ENCODE measurements at regions of chr12 and their contacts with region 1.

Region 1: DNA sequence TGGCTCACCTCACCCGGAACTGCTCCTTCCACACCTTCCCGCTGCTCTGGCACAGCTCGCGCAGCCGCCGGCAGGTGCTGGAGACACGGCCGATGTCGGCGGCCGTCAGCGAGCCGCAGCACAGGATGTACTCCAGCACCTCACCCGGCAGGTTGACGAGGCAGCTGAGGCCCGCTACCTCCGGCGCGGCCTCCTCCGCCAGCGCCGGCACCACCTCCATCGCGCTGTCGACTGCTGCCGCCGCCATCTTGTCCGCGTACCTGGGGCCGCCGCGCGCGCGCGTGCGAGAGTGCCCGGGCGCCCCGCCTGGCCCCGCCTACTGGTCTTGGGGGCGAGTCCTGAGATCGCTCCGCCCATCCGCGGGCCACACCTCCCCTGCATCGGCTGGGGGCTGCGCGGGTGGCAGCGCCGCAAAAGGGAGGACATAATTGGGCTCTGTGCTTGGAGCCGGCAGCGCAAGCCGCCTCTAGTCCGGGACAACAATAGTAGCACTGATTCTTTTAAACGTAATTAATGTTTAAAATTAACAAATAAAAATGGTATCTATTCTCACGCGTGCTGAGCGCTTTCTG is at the start of gene FBXO21:
- DNase-seq: peak; percentile 87 to 95
- H3K4me3 ChIP-seq: peak within 1 kb of the TSS; percentile 100
- H3K4me3 Mint-ChIP-seq: peak within 1 kb of the TSS; percentile 89
- H3K27ac Mint-ChIP-seq: peak within 1 kb of the TSS; percentile 45
- H3K4me1 ChIP-seq: peaks cover 6% of the 10 kb centered on the region; the same call in 1 of the 2 replicates
- H3K4me1 Mint-ChIP-seq: peaks cover 12% of the 10 kb centered on the region
- H3K27me3 ChIP-seq: no peaks in the 10 kb centered on the region
- H3K27me3 Mint-ChIP-seq: peaks cover 4% of the 10 kb centered on the region
- CTCF ChIP-seq: no peak
- total RNA-seq, gene FBXO21: 37.3 and 44.5 TPM in 2 replicates

Region 2: GRCh38 chr12:117158911-117159310 is 31.4 kb before region 1 on chr12:
- CTCF ChIA-PET with region 1: no interaction called
- POLR2A ChIA-PET with region 1: no interaction called
- intact Hi-C with region 1: loop called (anchors 2 kb)
- DNase-seq: peak in 1 of 2 experiments; percentile 35
- H3K4me3 ChIP-seq: no peak overlapping the region
- H3K4me3 Mint-ChIP-seq: no peak overlapping the region
- H3K27ac Mint-ChIP-seq: peak overlapping the region; percentile 77
- H3K4me1 ChIP-seq: peaks cover 6% of the 10 kb centered on the region
- H3K4me1 Mint-ChIP-seq: peaks cover 24% of the 10 kb centered on the region
- H3K27me3 ChIP-seq: no peaks in the 10 kb centered on the region
- H3K27me3 Mint-ChIP-seq: no peaks in the 10 kb centered on the region
- CTCF ChIP-seq: no peak